Dendritic cell treated with granulocyte-macrophage colony-stimulating factor and Interleukin-4, amounts not matched to agents 40 ng/mL and 50 ng/mL, for 4 days (primary cell): ENCODE measurements at regions of chr13 and their contacts with region 1.

Region 1: GRCh38 chr13:26253787-26254582 is at the start of gene CDK8:
- H3K4me3 Mint-ChIP-seq: peak within 1 kb of the TSS; percentile 86
- H3K27ac Mint-ChIP-seq: peak within 1 kb of the TSS; percentile 93
- H3K4me1 Mint-ChIP-seq: peaks cover 19% of the 10 kb centered on the region
- H3K27me3 Mint-ChIP-seq: no peaks in the 10 kb centered on the region

Region 2: GRCh38 chr13:25306671-25307464 is 947.1 kb before region 1 on chr13:
- intact Hi-C with region 1: no loop called
- H3K4me3 Mint-ChIP-seq: no peak overlapping the region
- H3K27ac Mint-ChIP-seq: peak overlapping the region; percentile 53
- H3K4me1 Mint-ChIP-seq: peaks cover 61% of the 10 kb centered on the region
- H3K27me3 Mint-ChIP-seq: no peaks in the 10 kb centered on the region

Region 3: GRCh38 chr13:26221721-26222519 is 32.1 kb before region 1 on chr13 and contains the start of gene RNF6:
- intact Hi-C with region 1: loop called (anchors 1 kb)
- H3K4me3 Mint-ChIP-seq: peak within 1 kb of the TSS; percentile 99
- H3K27ac Mint-ChIP-seq: peak within 1 kb of the TSS; percentile 99
- H3K4me1 Mint-ChIP-seq: peaks cover 25% of the 10 kb centered on the region
- H3K27me3 Mint-ChIP-seq: no peaks in the 10 kb centered on the region

Region 4: DNA sequence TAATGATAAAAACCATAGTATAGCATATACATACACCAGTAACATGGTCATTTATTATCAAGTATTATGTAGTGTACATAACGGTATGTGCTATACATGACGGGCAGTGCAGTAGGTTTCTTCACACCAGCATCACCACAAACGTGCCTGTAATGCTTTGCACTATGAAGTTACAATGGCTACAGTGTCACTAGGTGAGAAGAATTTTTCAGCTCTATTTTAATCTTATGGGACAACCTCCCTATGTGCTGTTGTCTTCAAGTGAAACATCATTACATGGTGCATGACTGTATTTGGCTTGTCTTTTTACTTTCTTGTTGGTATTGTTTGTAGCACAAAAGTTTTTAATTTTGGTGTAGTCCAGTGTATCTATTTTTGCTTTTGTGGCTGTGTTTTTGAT is 18.6 kb after region 1 on chr13:
- intact Hi-C with region 1: no loop called
- H3K4me3 Mint-ChIP-seq: no peak overlapping the region
- H3K27ac Mint-ChIP-seq: no peak overlapping the region
- H3K4me1 Mint-ChIP-seq: peaks cover 10% of the 10 kb centered on the region
- H3K27me3 Mint-ChIP-seq: no peaks in the 10 kb centered on the region

Region 5: DNA sequence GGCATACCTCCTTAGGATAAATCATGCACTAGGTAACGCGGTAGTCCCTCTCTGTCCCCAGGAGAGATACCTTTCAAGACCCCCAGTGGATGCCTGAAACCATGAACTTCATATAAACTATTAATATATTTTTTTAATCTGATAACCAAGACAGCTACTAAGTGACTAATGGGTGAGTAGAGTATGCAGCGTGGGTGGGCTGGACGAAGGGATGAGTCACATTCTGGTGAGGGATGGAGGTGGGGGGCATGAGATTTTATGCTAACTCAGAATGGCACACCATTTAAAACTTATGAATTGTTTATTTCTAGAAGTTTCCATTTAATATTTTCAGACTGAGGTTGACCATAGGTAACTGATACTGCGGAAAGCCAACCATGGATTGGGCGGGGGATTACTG is 46.2 kb after region 1 on chr13:
- intact Hi-C with region 1: no loop called
- H3K4me3 Mint-ChIP-seq: no peak overlapping the region
- H3K27ac Mint-ChIP-seq: no peak overlapping the region
- H3K4me1 Mint-ChIP-seq: peaks cover 10% of the 10 kb centered on the region
- H3K27me3 Mint-ChIP-seq: no peaks in the 10 kb centered on the region

Region 6: GRCh38 chr13:26485786-26486185 is 231.8 kb after region 1 on chr13:
- intact Hi-C with region 1: no loop called
- H3K4me3 Mint-ChIP-seq: no peak overlapping the region
- H3K27ac Mint-ChIP-seq: no peak overlapping the region
- H3K4me1 Mint-ChIP-seq: no peaks in the 10 kb centered on the region
- H3K27me3 Mint-ChIP-seq: peaks cover 1% of the 10 kb centered on the region